Ascending aorta (tissue), 2 donors: ENCODE measurements at regions of chr18 and their contacts with region 1.

Region 1: DNA sequence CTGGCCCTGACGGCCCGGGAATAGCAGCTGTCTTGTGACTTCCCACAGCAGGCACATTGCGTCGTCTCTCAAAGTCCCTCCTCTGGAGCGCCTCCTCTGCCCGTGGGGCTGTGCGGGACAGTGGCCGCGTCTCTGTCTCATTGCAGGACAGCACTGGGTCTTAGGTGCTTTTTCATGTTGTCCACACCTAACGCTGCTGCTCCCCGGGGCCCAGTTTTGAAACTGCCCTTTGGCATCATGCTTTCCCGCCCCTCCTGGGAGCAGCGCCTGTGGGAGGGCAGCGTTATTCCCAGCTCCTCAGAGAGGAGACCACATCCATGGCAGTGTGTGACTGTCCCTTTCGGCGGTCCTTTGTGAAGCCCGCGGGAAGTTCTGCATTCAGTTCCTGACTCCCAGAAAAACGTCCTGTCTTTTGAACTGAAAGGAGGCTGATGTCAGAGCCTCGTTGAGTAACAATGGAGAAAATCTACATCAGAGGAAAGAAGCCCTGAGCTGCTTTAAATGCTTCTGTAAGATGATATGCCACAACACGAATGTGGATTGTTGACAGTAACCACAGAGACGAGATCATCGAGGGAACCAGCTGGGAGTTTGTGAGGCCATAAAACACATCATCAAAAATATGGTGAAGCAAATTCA is 226.0 kb downstream of the FAM210A start:
- DNase-seq: peak in 1 of 2 donors; percentile 79
- H3K4me3 ChIP-seq: peak overlapping the region in 1 of 2 donors; percentile 48
- H3K27ac ChIP-seq: peak overlapping the region; percentile 90 to 91
- H3K4me1 ChIP-seq: peaks cover 8 to 45% of the 10 kb centered on the region in 2 donors
- H3K27me3 ChIP-seq: no peaks in the 10 kb centered on the region
- CTCF ChIP-seq: no peak

Region 2: DNA sequence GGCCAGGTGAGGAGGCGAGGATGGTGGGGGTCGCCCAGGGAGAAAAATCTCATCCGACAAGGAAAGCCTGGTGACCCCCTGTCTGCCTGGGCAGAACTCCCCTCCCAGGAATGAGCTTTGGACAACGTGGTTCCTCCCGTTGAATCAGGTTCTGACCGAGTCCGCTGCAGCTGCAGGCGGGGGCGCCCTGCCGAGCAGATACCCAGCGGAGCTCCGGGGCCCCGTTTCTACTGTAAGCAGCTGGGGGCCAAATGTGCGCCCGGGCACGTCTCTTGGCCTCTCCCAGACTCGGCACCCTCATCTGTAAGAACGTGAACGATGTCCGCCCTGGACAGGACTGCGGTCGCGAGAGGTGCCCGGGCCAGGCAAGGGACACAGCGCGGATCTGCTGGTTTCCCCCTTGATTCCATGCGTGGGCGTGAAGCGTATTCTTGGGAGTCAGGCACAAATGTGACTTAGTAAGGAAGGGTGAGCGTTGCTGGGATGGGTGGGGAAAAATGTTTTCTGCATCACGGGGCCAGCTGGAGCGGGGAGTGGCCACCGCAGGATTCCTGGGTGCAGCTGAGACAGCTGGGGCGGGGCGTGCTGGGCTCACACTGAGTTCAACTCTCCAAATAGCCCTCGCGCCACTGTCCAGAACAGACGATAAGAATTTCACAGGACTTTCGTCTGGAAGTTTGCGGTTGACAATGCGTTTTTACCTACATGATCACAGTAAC is 1212.5 kb before region 1 on chr18:
- intact Hi-C with region 1: loop called (anchors 10 kb)
- DNase-seq: peak; percentile 41 to 94
- H3K4me3 ChIP-seq: peak overlapping the region; percentile 41 to 65
- H3K27ac ChIP-seq: peak overlapping the region; percentile 85 to 86
- H3K4me1 ChIP-seq: peaks cover 5 to 7% of the 10 kb centered on the region in 2 donors
- H3K27me3 ChIP-seq: no peaks in the 10 kb centered on the region
- CTCF ChIP-seq: no peak

Region 3: GRCh38 chr18:13375302-13376255 is 124.8 kb before region 1 on chr18:
- intact Hi-C with region 1: loop called (anchors 2 kb)
- DNase-seq: peak; percentile 64 to 93
- H3K4me3 ChIP-seq: peak overlapping the region in 1 of 2 donors; percentile 9
- H3K27ac ChIP-seq: peak overlapping the region; percentile 69 to 73
- H3K4me1 ChIP-seq: peaks cover 6 to 37% of the 10 kb centered on the region in 2 donors
- H3K27me3 ChIP-seq: no peaks in the 10 kb centered on the region
- CTCF ChIP-seq: peak; percentile 9 to 18 (median 9)

Region 4: GRCh38 chr18:13435596-13436327 is 64.6 kb before region 1 on chr18:
- intact Hi-C with region 1: loop called (anchors 5 kb)
- DNase-seq: peak; percentile 57 to 90
- H3K4me3 ChIP-seq: no peak overlapping the region
- H3K27ac ChIP-seq: peak overlapping the region; percentile 86 to 91
- H3K4me1 ChIP-seq: peaks cover 3 to 50% of the 10 kb centered on the region in 2 donors
- H3K27me3 ChIP-seq: no peaks in the 10 kb centered on the region
- CTCF ChIP-seq: no peak

Region 5: GRCh38 chr18:13530879-13531387 is 30.6 kb after region 1 on chr18:
- intact Hi-C with region 1: loop called (anchors 2 kb)
- DNase-seq: peak; percentile 43 to 89
- H3K4me3 ChIP-seq: peak overlapping the region in 1 of 2 donors; percentile 46
- H3K27ac ChIP-seq: peak overlapping the region; percentile 78 to 81
- H3K4me1 ChIP-seq: peaks cover 5 to 11% of the 10 kb centered on the region in 2 donors
- H3K27me3 ChIP-seq: no peaks in the 10 kb centered on the region
- CTCF ChIP-seq: peak; percentile 75 to 84 (median 77)

Region 6: DNA sequence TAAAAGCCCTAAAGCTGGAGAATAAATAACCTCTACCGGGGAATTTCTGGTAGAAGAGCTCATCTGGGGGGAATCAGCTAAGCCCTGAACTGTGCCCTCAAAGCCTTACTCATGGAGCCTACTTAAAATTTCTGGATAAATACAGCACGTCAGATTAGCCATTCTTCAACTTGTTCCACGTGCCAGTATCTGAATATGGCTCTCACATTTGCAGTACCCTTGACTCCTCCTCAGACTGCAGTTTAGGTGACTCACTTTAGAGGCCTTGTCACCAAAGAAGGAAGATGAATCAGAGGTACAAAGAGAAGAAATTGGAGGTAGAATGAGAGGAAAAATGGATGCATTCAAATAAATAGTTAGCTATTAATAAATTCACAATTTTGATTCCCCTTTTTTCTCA is 1077.6 kb after region 1 on chr18:
- intact Hi-C with region 1: no loop called
- DNase-seq: no peak
- H3K4me3 ChIP-seq: no peak overlapping the region
- H3K27ac ChIP-seq: no peak overlapping the region
- H3K4me1 ChIP-seq: no peaks in the 10 kb centered on the region
- H3K27me3 ChIP-seq: no peaks in the 10 kb centered on the region
- CTCF ChIP-seq: no peak